Naive thymus-derived CD4-positive, alpha-beta T cell (primary cell): ENCODE measurements at regions of chrX and their contacts with region 1.

Region 1: DNA sequence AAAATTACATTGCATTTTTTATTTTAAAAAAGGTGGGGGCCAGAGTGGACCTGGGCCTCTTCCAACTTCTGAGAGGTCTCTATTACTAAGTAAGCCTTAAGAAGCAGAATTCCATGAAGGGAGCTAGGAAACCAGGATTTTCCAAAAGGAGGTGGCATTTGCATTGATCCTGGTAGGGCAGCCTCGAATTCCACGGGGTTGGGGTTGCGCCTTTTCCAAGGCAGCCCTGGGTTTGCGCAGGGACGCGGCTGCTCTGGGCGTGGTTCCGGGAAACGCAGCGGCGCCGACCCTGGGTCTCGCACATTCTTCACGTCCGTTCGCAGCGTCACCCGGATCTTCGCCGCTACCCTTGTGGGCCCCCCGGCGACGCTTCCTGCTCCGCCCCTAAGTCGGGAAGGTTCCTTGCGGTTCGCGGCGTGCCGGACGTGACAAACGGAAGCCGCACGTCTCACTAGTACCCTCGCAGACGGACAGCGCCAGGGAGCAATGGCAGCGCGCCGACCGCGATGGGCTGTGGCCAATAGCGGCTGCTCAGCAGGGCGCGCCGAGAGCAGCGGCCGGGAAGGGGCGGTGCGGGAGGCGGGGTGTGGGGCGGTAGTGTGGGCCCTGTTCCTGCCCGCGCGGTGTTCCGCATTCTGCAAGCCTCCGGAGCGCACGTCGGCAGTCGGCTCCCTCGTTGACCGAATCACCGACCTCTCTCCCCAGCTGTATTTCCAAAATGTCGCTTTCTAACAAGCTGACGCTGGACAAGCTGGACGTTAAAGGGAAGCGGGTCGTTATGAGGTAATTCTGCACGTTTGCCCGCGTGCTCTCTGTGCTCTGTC is at the start of gene PGK1:
- DNase-seq: peak; percentile 76 to 96 (median 93)
- ATAC-seq: peak; percentile 97
- H3K4me3 ChIP-seq: peak within 1 kb of the TSS; percentile 98
- H3K4me3 Mint-ChIP-seq: peak within 1 kb of the TSS; percentile 89 to 99 (median 92)
- H3K27ac ChIP-seq: peak within 1 kb of the TSS; percentile 97
- H3K27ac Mint-ChIP-seq: peak within 1 kb of the TSS; percentile 90 to 97 (median 94)
- H3K4me1 ChIP-seq: peaks cover 21 to 27% of the 10 kb centered on the region in 2 donors
- H3K4me1 Mint-ChIP-seq: peaks cover 15 to 57% (median 48%) of the 10 kb centered on the region in 7 donors
- H3K27me3 ChIP-seq: no peaks in the 10 kb centered on the region
- H3K27me3 Mint-ChIP-seq: no peaks in the 10 kb centered on the region
- total RNA-seq, gene PGK1: 180 to 1,293 (median 217) TPM

Region 2: DNA sequence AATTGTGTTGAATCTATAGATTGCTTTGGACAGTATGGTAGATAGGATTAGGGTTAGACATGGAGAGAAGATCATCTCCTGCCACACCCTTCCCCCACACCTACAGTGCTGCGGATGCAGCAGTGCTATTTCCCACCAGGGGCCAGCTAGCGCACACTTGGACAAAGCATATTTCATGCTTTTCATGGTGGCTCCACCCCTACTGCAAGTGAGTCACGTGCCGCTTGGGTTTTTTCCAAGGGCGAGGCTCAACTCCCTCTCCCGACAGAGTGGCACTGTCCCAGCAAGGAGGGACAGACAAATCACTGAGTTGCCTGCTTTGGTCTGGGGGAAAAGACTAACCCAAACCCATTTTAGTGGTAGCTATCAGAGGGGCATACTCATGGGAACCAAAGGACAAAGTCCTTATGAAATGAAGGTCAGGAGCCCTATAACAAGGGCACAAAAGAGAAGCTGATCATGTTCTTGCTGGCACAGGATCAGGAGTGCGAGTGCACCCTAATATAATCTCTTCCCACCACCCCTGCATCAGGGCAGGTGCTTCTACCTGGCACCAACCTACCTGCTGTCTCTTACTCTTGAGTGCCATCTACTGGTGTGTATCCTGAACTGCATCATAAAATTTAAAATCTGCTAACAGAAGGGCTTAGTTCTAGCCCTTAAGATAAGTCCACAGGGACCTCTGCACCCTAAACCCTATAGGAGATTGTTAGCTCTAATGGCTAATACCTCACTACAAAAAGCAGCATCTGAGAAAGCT is 79.3 kb before region 1 on chrX:
- CTCF ChIA-PET with region 1: no interaction called
- POLR2A ChIA-PET with region 1: interaction called, 4 read pairs
- intact Hi-C with region 1: loop called in 1 of 2 experiments (anchors 5 kb)
- DNase-seq: peak in 7 of 9 donors; percentile 16 to 63 (median 59)
- ATAC-seq: peak; percentile 87
- H3K4me3 ChIP-seq: no peak overlapping the region
- H3K4me3 Mint-ChIP-seq: no peak overlapping the region
- H3K27ac ChIP-seq: no peak overlapping the region
- H3K27ac Mint-ChIP-seq: peak overlapping the region in 4 of 9 donors; percentile 5 to 42 (median 28)
- H3K4me1 ChIP-seq: no peaks in the 10 kb centered on the region
- H3K4me1 Mint-ChIP-seq: peaks cover 0 to 6% (median 5%) of the 10 kb centered on the region in 7 donors
- H3K27me3 ChIP-seq: no peaks in the 10 kb centered on the region
- H3K27me3 Mint-ChIP-seq: no peaks in the 10 kb centered on the region

Region 3: DNA sequence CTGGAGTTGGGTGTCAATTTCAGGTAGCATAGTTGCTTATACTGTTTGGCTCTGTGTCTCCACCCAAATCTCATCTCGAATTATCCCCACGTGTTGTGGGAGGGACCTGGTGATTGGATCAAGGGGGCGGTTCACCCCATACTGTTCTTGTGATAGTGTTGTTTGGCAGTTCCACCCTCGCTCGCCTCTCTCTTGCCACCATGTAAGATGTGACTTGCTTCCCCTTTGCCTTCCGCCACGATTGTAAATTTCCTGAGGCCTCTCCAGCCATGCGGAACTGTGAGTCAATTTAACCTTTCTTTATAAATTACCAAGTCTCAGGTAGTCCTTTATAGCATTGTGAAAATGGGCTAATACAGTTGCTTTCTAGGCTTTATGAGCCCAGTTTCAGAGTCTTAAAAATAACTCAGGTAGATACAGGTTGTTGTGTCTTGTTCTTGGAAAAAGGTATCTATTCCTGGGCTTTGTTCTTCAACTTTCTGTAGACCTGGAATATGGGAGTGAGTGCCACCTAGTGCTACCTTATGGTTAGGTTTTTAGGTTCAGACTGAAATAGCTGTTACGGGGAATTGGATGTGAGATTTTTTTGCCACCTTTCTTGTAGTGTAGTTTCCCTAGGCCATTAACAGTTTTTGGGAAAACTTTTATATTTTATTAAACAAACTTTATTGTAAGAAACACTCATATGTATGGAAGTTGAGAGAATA is 15.8 kb after region 1 on chrX:
- CTCF ChIA-PET with region 1: interaction called, 5 read pairs
- POLR2A ChIA-PET with region 1: interaction called, 8 read pairs
- intact Hi-C with region 1: loop called in 1 of 2 experiments (anchors 1 kb)
- DNase-seq: no peak
- ATAC-seq: peak; percentile 45
- H3K4me3 ChIP-seq: no peak overlapping the region
- H3K4me3 Mint-ChIP-seq: peak overlapping the region in 1 of 10 donors; percentile 12
- H3K27ac ChIP-seq: peak overlapping the region; percentile 27
- H3K27ac Mint-ChIP-seq: peak overlapping the region in 6 of 9 donors; percentile 11 to 84 (median 28)
- H3K4me1 ChIP-seq: peaks cover 0 to 25% of the 10 kb centered on the region in 2 donors
- H3K4me1 Mint-ChIP-seq: peaks cover 26 to 70% (median 56%) of the 10 kb centered on the region in 7 donors
- H3K27me3 ChIP-seq: no peaks in the 10 kb centered on the region
- H3K27me3 Mint-ChIP-seq: no peaks in the 10 kb centered on the region

Region 4: GRCh38 chrX:78327370-78328086 is 223.7 kb after region 1 on chrX and contains the start of gene CYSLTR1:
- CTCF ChIA-PET with region 1: no interaction called
- POLR2A ChIA-PET with region 1: interaction called, 3 read pairs
- intact Hi-C with region 1: loop called (anchors 1 to 5 kb)
- DNase-seq: no peak
- ATAC-seq: peak; percentile 44
- H3K4me3 ChIP-seq: peak within 1 kb of the TSS; percentile 47
- H3K4me3 Mint-ChIP-seq: peak within 1 kb of the TSS; percentile 78 to 97 (median 88)
- H3K27ac ChIP-seq: peak within 1 kb of the TSS; percentile 84
- H3K27ac Mint-ChIP-seq: peak within 1 kb of the TSS; percentile 82 to 99 (median 93)
- H3K4me1 ChIP-seq: peaks cover 9 to 23% of the 10 kb centered on the region in 2 donors
- H3K4me1 Mint-ChIP-seq: peaks cover 26 to 65% (median 62%) of the 10 kb centered on the region in 7 donors
- H3K27me3 ChIP-seq: no peaks in the 10 kb centered on the region
- H3K27me3 Mint-ChIP-seq: no peaks in the 10 kb centered on the region
- total RNA-seq, gene CYSLTR1: 13.7 to 71.9 (median 24.9) TPM

Region 5: DNA sequence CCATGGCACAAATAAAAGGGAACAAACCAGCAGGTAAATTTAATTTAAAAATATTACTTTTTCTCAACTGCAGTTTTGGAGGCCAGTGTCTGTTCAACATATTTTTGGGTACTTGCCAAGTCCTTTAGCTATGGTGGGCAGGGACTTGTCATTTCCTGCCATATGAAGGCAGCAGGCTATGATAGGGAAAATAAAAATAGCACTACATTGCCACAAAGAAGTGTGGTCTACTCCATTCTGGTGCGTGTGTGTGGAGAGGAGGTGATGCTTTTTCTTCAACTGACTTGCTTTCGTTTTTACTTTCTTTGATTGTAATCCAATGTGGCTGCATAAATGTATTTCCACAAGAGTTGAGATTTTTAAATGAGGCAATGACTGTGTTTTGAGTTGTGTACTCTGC is 1057.8 kb after region 1 on chrX:
- CTCF ChIA-PET with region 1: no interaction called
- POLR2A ChIA-PET with region 1: no interaction called
- intact Hi-C with region 1: loop called in 1 of 2 experiments (anchors 5 kb)
- DNase-seq: peak in 8 of 9 donors; percentile 22 to 85 (median 77)
- ATAC-seq: peak; percentile 95
- H3K4me3 ChIP-seq: peak overlapping the region; percentile 52
- H3K4me3 Mint-ChIP-seq: peak overlapping the region; percentile 80 to 96 (median 90)
- H3K27ac ChIP-seq: peak overlapping the region; percentile 76
- H3K27ac Mint-ChIP-seq: peak overlapping the region; percentile 95 to 99 (median 97)
- H3K4me1 ChIP-seq: peaks cover 48 to 50% of the 10 kb centered on the region in 2 donors
- H3K4me1 Mint-ChIP-seq: peaks cover 16 to 79% (median 68%) of the 10 kb centered on the region in 7 donors
- H3K27me3 ChIP-seq: no peaks in the 10 kb centered on the region
- H3K27me3 Mint-ChIP-seq: no peaks in the 10 kb centered on the region